AG04450 (cell line): ENCODE measurements at regions of chr17 and their contacts with region 1.

Region 1: GRCh38 chr17:21287596-21288449 is 3.3 kb downstream of the MAP2K3 start:
- DNase-seq: peak; percentile 84
- H3K4me3 ChIP-seq: peak overlapping the region; percentile 86
- H3K27ac ChIP-seq: peak overlapping the region; percentile 94
- H3K27me3 ChIP-seq: no peaks in the 10 kb centered on the region
- CTCF ChIP-seq: no peak

Region 2: GRCh38 chr17:21275579-21276263 is 12.1 kb before region 1 on chr17:
- CTCF ChIA-PET with region 1: interaction called, 3 read pairs
- POLR2A ChIA-PET with region 1: interaction called, 14 read pairs
- DNase-seq: no peak
- H3K4me3 ChIP-seq: peak overlapping the region; percentile 69
- H3K27ac ChIP-seq: no peak overlapping the region
- H3K27me3 ChIP-seq: peaks cover 4% of the 10 kb centered on the region
- CTCF ChIP-seq: no peak